Breast epithelium (tissue), 4 donors: ENCODE measurements at regions of chr9 and their contacts with region 1.

Region 1: DNA sequence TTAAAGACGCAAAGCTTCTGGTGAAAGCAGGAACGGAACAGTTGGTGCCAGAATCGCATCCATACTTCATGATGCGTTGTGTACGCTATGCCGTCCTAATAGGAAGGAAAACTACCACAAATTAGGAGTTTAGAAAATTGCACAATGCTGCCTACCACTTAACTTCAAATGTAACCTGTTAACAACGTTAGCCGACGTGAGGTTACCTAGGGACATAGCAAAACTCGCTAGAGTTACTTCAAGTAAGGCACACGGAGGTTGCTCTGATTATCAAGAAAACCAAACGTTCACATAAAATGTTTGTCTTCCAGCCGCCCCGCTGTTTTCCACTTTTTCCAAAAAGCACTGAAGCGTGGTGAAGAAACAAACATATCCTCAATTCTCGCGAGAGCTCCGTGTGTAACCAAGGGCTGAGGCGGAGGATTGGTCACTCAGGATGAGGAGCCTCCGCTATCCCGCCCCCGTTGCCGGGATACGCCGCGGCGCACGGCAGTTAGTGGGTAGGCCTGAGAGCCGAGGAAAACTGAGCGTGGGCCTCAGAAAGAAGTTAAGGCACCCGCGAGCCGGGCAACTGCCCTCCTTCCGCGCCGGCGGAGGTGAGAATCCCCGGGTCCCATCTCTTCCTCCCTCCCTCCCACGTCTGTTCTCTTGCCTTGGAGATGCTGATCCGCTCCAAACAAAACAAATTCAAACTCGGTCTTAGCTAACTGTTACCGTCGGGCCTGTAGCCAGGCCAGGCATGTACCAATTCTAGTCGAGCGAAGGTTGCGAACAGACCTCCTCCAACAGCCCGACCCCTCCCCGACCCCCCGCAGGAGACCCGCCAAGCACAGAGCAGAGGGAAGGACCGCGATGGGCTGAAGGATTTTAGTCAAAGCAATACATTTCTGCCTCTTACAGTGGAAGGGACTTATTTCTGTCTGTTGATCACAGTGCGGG is at the start of gene IFT74:
- DNase-seq: peak; percentile 97 to 98
- H3K4me3 ChIP-seq: peak within 1 kb of the TSS; percentile 48 to 83 (median 67)
- H3K27ac ChIP-seq: peak within 1 kb of the TSS; percentile 91 to 93
- H3K4me1 ChIP-seq: peaks cover 0 to 8% of the 10 kb centered on the region in 2 donors
- H3K27me3 ChIP-seq: no peaks in the 10 kb centered on the region
- CTCF ChIP-seq: no peak
- POLR2A ChIP-seq: peak; percentile 12
- total RNA-seq, gene IFT74: 13.0 to 34.1 (median 21.0) TPM

Region 2: GRCh38 chr9:26066237-26066636 is 890.0 kb before region 1 on chr9:
- intact Hi-C with region 1: no loop called
- DNase-seq: no peak
- H3K4me3 ChIP-seq: no peak overlapping the region
- H3K27ac ChIP-seq: no peak overlapping the region
- H3K4me1 ChIP-seq: no peaks in the 10 kb centered on the region
- H3K27me3 ChIP-seq: no peaks in the 10 kb centered on the region
- CTCF ChIP-seq: no peak
- POLR2A ChIP-seq: no peak

Region 3: GRCh38 chr9:27539479-27540441 is 583.6 kb after region 1 on chr9:
- intact Hi-C with region 1: loop called (anchors 5 kb)
- DNase-seq: peak in 1 of 2 donors; percentile 39
- H3K4me3 ChIP-seq: peak overlapping the region in 1 of 3 donors; percentile 12
- H3K27ac ChIP-seq: peak overlapping the region; percentile 91 to 94
- H3K4me1 ChIP-seq: peaks cover 3 to 35% of the 10 kb centered on the region in 2 donors
- H3K27me3 ChIP-seq: no peaks in the 10 kb centered on the region
- CTCF ChIP-seq: no peak
- POLR2A ChIP-seq: no peak